ENCODE measurements at regions of chr20 and their contacts with region 1.

Region 1: DNA sequence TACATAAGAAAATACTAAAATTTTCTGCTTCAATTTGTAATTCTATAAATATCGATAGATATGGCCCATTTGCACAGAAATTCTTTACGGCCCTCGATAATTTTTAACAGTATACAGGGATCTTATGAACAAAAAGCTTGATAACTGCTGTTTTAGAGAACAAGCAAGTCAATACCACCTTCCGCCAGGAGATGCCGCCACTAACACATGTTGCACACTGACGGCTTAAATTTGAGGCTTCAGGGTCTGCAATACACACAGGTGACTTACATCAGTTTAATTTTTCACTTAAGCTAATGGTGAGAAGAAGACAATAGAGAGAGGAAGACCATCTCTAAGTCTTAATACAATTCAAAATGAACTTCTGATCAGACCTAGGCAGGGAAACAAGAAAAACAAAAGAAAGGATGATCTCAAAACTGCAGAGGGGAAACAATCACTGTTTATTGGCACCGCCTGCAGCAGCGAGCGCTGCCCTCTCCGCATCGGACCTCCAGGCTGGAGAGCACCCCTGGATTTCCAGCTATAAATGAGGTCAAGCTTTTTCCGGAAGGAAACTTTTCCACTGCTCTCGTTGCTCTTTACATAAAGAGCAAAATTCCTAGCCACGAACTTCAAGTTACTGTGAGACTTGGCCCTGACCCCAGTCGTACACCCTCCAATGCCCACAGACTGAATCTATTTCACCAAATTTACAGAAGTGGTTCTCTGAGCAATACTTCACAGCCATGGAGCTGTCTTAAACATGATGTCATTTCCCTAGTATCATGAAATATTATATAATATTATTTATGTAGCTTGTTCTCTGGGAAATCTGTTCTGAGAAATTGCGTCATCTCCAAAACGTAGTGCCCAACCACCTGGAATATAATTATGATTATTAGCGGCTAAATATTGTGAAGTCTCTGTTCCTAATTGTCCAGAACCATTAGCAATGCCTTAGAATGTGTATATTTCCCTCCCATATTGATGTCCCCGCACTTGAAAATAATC is 54.1 kb downstream of the OTOR start:
- DNase-seq: peak; percentile 48
- H3K4me3 ChIP-seq: 0 out of 4 replicates have a peak overlapping the region, but pooled peaks of 1 of the 2 experiments have one; percentile 12
- H3K27ac ChIP-seq: no peak overlapping the region
- H3K4me1 ChIP-seq: no peaks in the 10 kb centered on the region; a peak in 1 of 4 replicates
- H3K27me3 ChIP-seq: no peaks in the 10 kb centered on the region
- CTCF ChIP-seq: peak; percentile 91
- EP300 ChIP-seq: no peak
- RAD21 ChIP-seq: peak; percentile 86

Region 2: GRCh38 chr20:16451982-16452381 is 350.2 kb before region 1 on chr20:
- CTCF ChIA-PET with region 1: no interaction called
- POLR2A ChIA-PET with region 1: no interaction called
- DNase-seq: no peak
- H3K4me3 ChIP-seq: no peak overlapping the region
- H3K27ac ChIP-seq: no peak overlapping the region
- H3K4me1 ChIP-seq: peaks cover 0 to 4% of the 10 kb centered on the region in 2 experiments; a peak in 2 of 4 replicates
- H3K27me3 ChIP-seq: no peaks in the 10 kb centered on the region
- CTCF ChIP-seq: no peak
- EP300 ChIP-seq: no peak
- RAD21 ChIP-seq: no peak

Region 3: GRCh38 chr20:16710781-16711180 is 91.4 kb before region 1 on chr20:
- CTCF ChIA-PET with region 1: no interaction called
- POLR2A ChIA-PET with region 1: no interaction called
- DNase-seq: no peak
- H3K4me3 ChIP-seq: no peak overlapping the region
- H3K27ac ChIP-seq: no peak overlapping the region
- H3K4me1 ChIP-seq: no peaks in the 10 kb centered on the region
- H3K27me3 ChIP-seq: no peaks in the 10 kb centered on the region; the same call in 1 of the 2 replicates
- CTCF ChIP-seq: no peak
- EP300 ChIP-seq: no peak
- RAD21 ChIP-seq: no peak

Region 4: DNA sequence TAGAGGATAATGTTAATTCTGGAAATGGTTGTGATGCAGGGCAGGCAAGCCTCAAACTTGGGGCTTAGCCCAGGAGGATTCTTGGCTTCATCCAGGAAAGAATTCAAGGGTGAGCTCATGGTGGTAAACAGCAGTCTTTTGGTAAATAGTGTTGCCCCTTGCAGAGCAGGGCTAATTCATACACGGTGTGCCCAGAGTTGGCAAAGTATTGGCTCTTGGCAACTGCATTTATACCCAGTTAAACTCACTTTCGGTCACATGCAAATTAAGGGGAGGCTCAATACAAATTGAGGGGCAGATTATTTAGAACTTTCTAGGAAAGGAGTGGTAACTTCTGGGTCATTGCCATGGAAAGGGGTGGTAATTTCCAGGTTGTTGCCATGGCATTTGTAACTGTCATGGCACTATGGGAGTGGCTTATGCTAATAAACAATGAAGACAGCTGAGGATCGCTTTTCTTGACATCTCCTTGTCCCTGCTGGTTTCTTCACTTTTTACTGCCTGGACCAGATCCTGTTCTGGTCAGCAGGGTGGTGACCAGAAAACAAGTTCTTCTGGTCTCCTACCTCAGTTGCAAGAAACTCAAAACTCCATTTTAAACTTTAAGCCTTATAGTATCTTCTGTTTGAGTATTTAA is 57.9 kb before region 1 on chr20:
- CTCF ChIA-PET with region 1: no interaction called
- POLR2A ChIA-PET with region 1: no interaction called
- DNase-seq: no peak
- H3K4me3 ChIP-seq: no peak overlapping the region
- H3K27ac ChIP-seq: no peak overlapping the region
- H3K4me1 ChIP-seq: peaks cover 0 to 3% of the 10 kb centered on the region in 2 experiments; a peak in 2 of 4 replicates
- H3K27me3 ChIP-seq: no peaks in the 10 kb centered on the region
- CTCF ChIP-seq: no peak
- EP300 ChIP-seq: no peak
- RAD21 ChIP-seq: no peak

Region 5: DNA sequence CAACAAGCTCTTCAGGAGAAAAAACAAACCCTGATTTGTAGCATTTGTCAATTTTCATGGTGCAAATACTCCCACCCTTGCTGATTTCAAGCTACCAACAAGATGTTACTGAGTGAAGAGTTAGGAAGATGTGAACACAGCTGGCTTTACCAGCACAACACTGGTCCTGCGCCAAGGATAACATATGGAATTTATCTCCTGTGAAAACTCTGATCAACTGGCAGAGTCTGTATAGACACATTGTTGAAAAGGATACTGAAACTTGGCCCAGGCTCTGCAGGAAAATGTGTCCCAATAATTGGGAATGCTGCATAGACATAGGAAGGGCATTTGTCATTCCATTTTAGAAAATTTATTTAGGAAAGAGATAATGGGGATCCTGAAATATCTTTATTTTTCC is 25.1 kb before region 1 on chr20:
- CTCF ChIA-PET with region 1: interaction called, 11 read pairs
- POLR2A ChIA-PET with region 1: no interaction called
- DNase-seq: no peak
- H3K4me3 ChIP-seq: no peak overlapping the region
- H3K27ac ChIP-seq: no peak overlapping the region
- H3K4me1 ChIP-seq: no peaks in the 10 kb centered on the region
- H3K27me3 ChIP-seq: no peaks in the 10 kb centered on the region
- CTCF ChIP-seq: no peak
- EP300 ChIP-seq: no peak
- RAD21 ChIP-seq: no peak

Region 6: GRCh38 chr20:16821211-16822089 is 19.2 kb after region 1 on chr20:
- CTCF ChIA-PET with region 1: interaction called, 300 read pairs
- POLR2A ChIA-PET with region 1: interaction called, 7 read pairs
- DNase-seq: peak; percentile 47
- H3K4me3 ChIP-seq: peak overlapping the region in 1 of 2 experiments; percentile 51; a peak in 1 of 4 replicates
- H3K27ac ChIP-seq: no peak overlapping the region
- H3K4me1 ChIP-seq: no peaks in the 10 kb centered on the region
- H3K27me3 ChIP-seq: no peaks in the 10 kb centered on the region
- CTCF ChIP-seq: peak; percentile 88
- EP300 ChIP-seq: no peak
- RAD21 ChIP-seq: peak; percentile 75

Region 7: DNA sequence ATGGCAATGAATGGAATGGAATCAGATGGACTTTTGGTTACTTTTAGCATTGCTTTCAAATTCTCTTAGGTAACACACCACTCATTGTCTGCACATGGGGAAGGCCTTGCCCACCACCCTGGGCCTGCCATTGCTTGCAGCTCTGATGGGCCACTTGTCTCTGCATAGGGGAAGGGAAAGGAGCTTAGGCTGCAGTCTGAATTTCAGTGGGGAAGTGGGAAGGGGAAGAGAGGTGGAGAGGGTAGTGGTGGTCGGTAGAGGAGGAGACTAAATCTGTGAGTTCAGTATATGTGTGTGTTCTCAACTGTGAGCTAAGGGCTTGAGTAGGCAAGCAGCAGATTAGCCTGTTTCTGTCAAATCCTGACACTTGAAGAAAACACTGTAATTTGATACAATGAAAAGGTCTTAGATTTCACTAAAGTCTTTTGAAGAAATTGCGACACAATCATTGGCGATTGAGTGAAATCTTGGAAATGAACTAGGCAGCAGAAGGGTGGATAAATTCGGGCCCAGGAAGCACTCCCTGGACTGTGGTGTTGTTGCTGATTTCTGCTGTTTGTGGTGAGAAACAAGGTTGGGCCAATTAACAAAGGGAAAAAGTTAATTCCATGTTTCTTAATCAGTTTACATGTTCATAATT is 26.6 kb after region 1 on chr20:
- CTCF ChIA-PET with region 1: interaction called, 29 read pairs
- POLR2A ChIA-PET with region 1: no interaction called
- DNase-seq: no peak
- H3K4me3 ChIP-seq: no peak overlapping the region
- H3K27ac ChIP-seq: no peak overlapping the region
- H3K4me1 ChIP-seq: no peaks in the 10 kb centered on the region
- H3K27me3 ChIP-seq: no peaks in the 10 kb centered on the region
- CTCF ChIP-seq: no peak
- EP300 ChIP-seq: no peak
- RAD21 ChIP-seq: no peak

Region 8: GRCh38 chr20:17014217-17014616 is 212.0 kb after region 1 on chr20:
- CTCF ChIA-PET with region 1: no interaction called
- POLR2A ChIA-PET with region 1: no interaction called
- DNase-seq: peak; percentile 36
- H3K4me3 ChIP-seq: no peak overlapping the region
- H3K27ac ChIP-seq: no peak overlapping the region
- H3K4me1 ChIP-seq: no peaks in the 10 kb centered on the region
- H3K27me3 ChIP-seq: no peaks in the 10 kb centered on the region
- CTCF ChIP-seq: no peak
- EP300 ChIP-seq: no peak
- RAD21 ChIP-seq: no peak

Region 9: GRCh38 chr20:17281478-17281877 is 479.3 kb after region 1 on chr20:
- CTCF ChIA-PET with region 1: interaction called, 11 read pairs
- POLR2A ChIA-PET with region 1: no interaction called
- DNase-seq: peak; percentile 30
- H3K4me3 ChIP-seq: peak overlapping the region in 1 of 2 experiments; percentile 37; a peak in 1 of 4 replicates
- H3K27ac ChIP-seq: no peak overlapping the region
- H3K4me1 ChIP-seq: no peaks in the 10 kb centered on the region; a peak in 1 of 4 replicates
- H3K27me3 ChIP-seq: no peaks in the 10 kb centered on the region
- CTCF ChIP-seq: peak; percentile 48
- EP300 ChIP-seq: no peak
- RAD21 ChIP-seq: peak; percentile 44

Region 10: GRCh38 chr20:17421493-17421892 is 619.3 kb after region 1 on chr20:
- CTCF ChIA-PET with region 1: interaction called, 33 read pairs
- POLR2A ChIA-PET with region 1: no interaction called
- DNase-seq: no peak
- H3K4me3 ChIP-seq: no peak overlapping the region
- H3K27ac ChIP-seq: no peak overlapping the region
- H3K4me1 ChIP-seq: no peaks in the 10 kb centered on the region
- H3K27me3 ChIP-seq: no peaks in the 10 kb centered on the region
- CTCF ChIP-seq: no peak
- EP300 ChIP-seq: no peak
- RAD21 ChIP-seq: no peak

Region 11: GRCh38 chr20:17431621-17432364 is 629.6 kb after region 1 on chr20:
- CTCF ChIA-PET with region 1: interaction called, 270 read pairs
- POLR2A ChIA-PET with region 1: no interaction called
- DNase-seq: peak; percentile 69
- H3K4me3 ChIP-seq: peak overlapping the region in 1 of 2 experiments; percentile 40; a peak in 1 of 4 replicates
- H3K27ac ChIP-seq: no peak overlapping the region
- H3K4me1 ChIP-seq: no peaks in the 10 kb centered on the region; a peak in 1 of 4 replicates
- H3K27me3 ChIP-seq: no peaks in the 10 kb centered on the region; the same call in 1 of the 2 replicates
- CTCF ChIP-seq: peak; percentile 94
- EP300 ChIP-seq: no peak
- RAD21 ChIP-seq: peak; percentile 71

Measured in SK-N-SH (cell line).